Sigmoid colon (tissue), 7 donors: ENCODE measurements at regions of chr1 and their contacts with region 1.

Region 1: DNA sequence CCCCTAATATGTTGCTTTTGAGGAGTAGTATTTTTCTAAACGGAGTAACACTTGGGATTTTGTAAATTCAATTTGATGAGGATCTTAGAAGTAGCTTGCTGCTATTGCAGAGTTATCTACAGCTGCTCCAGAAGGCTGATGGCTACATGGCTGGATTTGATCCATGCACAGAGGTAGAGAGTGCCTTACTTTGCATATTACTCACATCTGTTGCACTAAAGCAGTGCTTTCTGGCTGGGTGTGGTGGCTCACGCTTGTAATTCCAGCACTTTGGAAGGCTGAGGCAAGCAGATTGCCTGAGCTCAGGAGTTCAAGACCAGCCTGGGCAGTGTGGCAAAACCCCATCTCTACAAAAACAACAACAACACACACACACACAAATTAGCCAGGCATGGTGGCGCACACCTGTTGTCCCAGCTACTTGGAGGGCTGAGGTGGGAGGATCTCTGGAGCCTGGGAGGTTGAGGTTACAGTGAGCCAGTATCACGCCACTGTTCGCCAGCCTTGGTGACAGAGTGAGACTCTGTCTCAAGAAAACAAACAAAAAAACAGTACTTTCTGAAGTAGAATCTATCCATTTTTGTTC is 24.6 kb downstream of the RALGPS2 start:
- DNase-seq: no peak
- H3K4me3 ChIP-seq: no peak overlapping the region
- H3K27ac ChIP-seq: no peak overlapping the region
- H3K4me1 ChIP-seq: peaks cover 0 to 8% (median 3%) of the 10 kb centered on the region in 4 donors
- H3K27me3 ChIP-seq: no peaks in the 10 kb centered on the region
- CTCF ChIP-seq: no peak
- EP300 ChIP-seq: no peak
- POLR2A ChIP-seq: no peak

Region 2: DNA sequence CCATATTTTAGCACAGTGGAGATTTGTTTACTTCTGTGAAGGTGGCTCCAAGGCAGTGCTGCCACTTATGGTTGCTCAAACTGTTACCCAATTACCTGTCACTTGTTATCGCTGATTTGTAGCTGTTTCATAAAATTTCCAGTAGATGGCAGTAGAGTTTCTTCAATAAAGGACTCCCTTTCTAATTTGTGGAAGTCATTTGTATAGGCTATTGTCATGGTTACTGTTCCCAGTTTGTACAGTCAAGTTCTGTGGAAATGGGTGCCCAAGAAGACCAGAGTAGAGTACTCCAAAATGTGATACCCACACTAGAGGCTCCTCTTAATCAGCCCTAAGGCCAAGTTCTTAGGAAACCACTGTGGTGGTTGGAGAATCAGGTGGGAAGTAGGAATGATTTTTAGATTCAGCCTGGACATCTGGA is 439.0 kb before region 1 on chr1:
- intact Hi-C with region 1: loop called (anchors 10 kb)
- DNase-seq: no peak
- H3K4me3 ChIP-seq: no peak overlapping the region
- H3K27ac ChIP-seq: no peak overlapping the region
- H3K4me1 ChIP-seq: peaks cover 0 to 14% (median 11%) of the 10 kb centered on the region in 4 donors
- H3K27me3 ChIP-seq: no peaks in the 10 kb centered on the region
- CTCF ChIP-seq: peak; percentile 29 to 70 (median 59)
- EP300 ChIP-seq: no peak
- POLR2A ChIP-seq: no peak

Region 3: GRCh38 chr1:178542560-178543356 is 206.9 kb before region 1 on chr1:
- intact Hi-C with region 1: loop called (anchors 1 kb)
- DNase-seq: peak; percentile 94
- H3K4me3 ChIP-seq: peak overlapping the region; percentile 63 to 90 (median 66)
- H3K27ac ChIP-seq: peak overlapping the region; percentile 81 to 87 (median 82)
- H3K4me1 ChIP-seq: peaks cover 0 to 43% (median 35%) of the 10 kb centered on the region in 4 donors
- H3K27me3 ChIP-seq: no peaks in the 10 kb centered on the region
- CTCF ChIP-seq: peak; percentile 97 to 99 (median 98)
- EP300 ChIP-seq: peak in 1 of 4 donors; percentile 25
- POLR2A ChIP-seq: no peak

Region 4: DNA sequence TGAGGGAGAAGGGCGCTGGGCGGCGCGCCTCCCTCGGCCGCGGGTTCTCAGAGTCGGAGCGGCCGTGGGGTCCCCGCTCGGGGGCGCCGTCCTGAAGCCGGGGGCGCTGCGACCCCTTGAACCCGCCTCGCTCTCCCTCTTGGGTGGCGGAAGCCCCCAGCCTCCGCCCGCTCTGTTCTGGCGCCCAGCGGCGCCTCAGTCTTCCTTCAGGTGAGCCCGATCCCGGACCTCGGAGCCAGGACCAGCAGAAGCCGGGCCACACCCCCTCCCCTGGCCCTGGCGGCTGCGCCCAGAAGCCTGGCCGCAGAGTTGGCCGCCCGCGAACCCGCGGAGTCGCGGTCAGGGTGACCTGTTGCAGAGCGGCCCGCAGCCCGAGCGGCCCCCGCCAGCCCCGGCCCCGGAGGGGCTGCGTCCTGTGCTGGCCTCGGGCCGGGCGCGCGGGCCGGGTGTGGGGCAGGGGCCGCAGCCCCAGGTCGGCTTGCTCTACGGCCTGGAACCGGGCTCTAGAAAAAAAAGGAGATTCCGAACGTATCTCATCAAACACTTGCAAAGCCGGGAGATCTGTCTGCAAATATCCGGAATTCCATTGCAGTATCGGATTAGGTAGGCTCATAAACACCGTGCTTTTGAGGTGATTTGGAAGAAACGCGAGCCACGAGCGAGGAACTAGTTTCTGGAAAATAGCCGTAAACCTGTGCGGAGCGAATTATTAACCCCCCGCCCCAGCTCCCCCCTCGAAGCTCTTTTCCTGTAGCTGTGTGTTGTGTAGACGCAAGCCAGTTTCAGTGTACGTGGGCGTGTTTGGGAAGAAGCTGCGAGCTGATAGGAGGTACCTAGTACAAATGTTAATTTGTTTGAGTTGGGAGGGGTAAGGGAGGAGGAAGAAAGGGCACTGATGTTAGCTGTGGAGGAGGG is 23.8 kb before region 1 on chr1:
- intact Hi-C with region 1: loop called (anchors 2 kb)
- DNase-seq: peak; percentile 83
- H3K4me3 ChIP-seq: peak overlapping the region; percentile 68 to 99 (median 88)
- H3K27ac ChIP-seq: peak overlapping the region; percentile 81 to 90 (median 88)
- H3K4me1 ChIP-seq: peaks cover 0 to 14% (median 2%) of the 10 kb centered on the region in 4 donors
- H3K27me3 ChIP-seq: no peaks in the 10 kb centered on the region
- CTCF ChIP-seq: no peak
- EP300 ChIP-seq: no peak
- POLR2A ChIP-seq: no peak